Endothelial cell of umbilical vein (primary cell): ENCODE measurements at regions of chr7 and their contacts with region 1.

Region 1: DNA sequence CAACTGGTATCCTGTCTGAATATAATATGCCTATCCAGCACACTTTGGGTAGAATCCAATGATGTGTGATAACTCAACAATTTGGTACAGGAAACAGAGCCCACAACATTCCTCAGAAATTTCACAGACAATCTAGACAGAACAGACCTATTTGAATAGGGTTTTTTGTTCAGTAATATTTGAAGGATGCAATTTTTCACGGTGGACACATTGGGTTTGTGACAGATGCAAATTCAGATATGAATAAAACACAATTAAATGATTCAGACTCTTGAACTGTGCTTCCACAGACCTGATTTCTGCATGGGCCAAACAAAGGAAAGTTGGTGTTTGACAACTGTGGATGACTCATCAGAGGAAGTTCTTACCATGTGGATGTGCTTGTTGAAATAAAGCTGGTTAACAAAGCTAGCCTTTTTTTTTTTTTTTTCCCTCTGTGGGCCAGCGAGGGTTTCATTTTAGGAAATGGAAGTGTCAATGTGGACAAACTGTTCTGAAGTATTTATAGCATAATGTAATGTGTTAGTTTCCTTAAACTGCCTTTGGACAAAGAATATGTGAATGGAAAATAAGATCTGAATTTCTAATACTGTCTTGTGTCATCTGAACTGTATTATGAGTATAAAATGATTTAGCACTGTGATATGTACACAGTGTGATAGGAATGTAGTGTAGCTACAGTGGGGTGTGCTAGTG is 43.2 kb upstream of the FAM133B start:
- DNase-seq: peak; percentile 98
- H3K4me3 ChIP-seq: peak overlapping the region in 1 of 3 experiments; percentile 31
- H3K27ac ChIP-seq: peak overlapping the region; percentile 99
- H3K4me1 ChIP-seq: peaks cover 57% of the 10 kb centered on the region
- H3K27me3 ChIP-seq: no peaks in the 10 kb centered on the region
- CTCF ChIP-seq: no peak
- POLR2A ChIP-seq: peak; percentile 27

Region 2: DNA sequence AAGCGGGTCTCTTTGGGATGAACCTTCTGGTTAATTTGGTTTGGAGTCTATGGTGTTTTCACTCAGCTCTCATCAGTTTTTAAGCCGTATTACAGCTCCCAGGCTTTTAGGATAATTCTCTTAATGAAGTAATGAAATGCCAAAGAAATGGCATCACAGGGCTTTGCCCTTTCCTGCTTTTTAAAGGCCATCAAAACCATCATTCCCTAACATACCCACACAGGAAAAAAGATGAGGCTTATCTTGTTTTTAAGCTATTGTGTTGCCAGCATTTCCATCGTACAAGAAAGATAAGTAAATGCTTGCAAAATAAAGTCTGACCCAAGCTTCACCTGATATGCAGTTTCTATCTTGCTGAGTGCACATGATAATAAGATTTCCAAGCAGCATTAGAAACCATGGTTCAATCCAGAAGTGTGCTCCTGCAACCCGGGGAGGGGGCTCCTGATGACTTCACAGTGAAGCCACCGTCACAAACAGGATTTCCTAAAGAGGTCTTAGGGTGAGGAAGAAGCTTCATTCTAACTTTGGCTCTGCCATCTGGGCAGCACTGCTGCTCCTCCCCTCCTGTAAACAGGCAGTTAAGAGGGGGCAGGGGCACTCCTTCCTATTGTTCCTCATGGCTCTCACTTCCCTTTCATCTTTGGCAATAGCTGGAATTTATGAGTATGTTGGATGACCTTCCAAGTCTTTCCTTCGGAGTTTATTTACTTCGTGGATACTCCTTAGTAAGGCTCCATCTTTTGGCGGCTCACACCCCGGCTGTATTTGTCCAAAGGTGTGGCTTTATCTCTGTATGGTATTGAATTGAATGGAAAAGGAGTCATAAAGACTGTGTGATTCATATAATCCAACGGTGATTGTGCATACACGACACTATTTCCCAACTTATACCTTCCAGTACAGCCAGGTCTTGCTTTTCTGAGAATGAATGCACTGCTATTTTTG is 12.0 kb after region 1 on chr7:
- CTCF ChIA-PET with region 1: interaction called, 28 read pairs
- POLR2A ChIA-PET with region 1: interaction called, 5 read pairs
- dilution Hi-C with region 1: no loop called
- intact Hi-C with region 1: loop called (anchors 1 kb)
- DNase-seq: peak; percentile 90
- H3K4me3 ChIP-seq: no peak overlapping the region
- H3K27ac ChIP-seq: peak overlapping the region; percentile 53
- H3K4me1 ChIP-seq: peaks cover 35% of the 10 kb centered on the region
- H3K27me3 ChIP-seq: no peaks in the 10 kb centered on the region
- CTCF ChIP-seq: no peak
- POLR2A ChIP-seq: no peak

Region 3: DNA sequence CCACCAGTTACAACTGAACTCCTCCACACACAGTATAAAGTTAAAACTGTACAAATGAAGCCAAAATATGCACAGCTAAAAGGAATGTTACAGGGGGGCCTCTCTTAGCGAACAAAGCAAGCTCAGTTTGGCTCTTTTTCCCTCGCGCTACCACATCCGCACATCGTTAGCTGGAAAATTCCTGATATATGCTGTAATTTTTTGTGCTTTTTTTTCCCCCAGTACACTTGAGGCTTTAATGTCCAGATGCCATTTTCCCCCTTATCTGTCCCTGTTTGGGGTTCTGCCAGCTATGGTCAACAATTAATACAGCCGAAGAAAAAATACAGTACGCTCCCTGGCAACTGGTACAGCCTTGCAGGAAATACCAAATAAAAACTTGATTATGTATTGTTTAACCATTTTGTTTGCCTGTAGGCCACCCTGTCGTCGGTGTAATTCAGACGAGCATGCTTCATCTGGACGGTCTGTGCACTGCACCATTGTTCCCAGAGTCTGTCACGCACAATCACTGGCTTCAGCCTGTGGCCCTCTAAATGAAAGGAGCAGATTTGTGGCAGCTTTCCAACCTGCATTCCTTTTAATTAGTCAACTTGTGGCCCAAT is 65.0 kb after region 1 on chr7:
- CTCF ChIA-PET with region 1: interaction called, 6 read pairs
- POLR2A ChIA-PET with region 1: interaction called, 6 read pairs
- dilution Hi-C with region 1: no loop called
- intact Hi-C with region 1: loop called (anchors 1 kb)
- DNase-seq: peak; percentile 95
- H3K4me3 ChIP-seq: peak overlapping the region in 1 of 3 experiments; percentile 1
- H3K27ac ChIP-seq: peak overlapping the region; percentile 75
- H3K4me1 ChIP-seq: peaks cover 44% of the 10 kb centered on the region
- H3K27me3 ChIP-seq: no peaks in the 10 kb centered on the region
- CTCF ChIP-seq: no peak
- POLR2A ChIP-seq: peak; percentile 35

Region 4: DNA sequence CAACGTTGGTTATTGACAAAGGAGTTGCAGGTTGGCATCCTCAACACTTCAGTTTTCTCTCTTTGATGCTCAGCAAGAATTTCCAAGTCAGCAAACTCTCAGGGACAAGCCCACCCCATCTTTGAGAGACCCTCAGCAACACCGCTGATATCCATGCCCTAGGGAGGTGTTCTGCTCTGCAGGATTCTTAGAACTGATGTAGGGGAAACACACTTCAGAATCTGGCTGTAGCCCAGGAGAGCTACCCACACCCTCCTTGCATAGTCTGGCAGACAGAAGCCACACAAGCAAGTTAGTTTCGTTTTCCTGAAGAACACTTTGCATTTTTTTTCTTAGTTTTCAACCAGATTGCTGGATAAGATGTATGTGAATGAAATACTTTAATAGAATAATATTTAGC is 514.0 kb after region 1 on chr7:
- CTCF ChIA-PET with region 1: no interaction called
- POLR2A ChIA-PET with region 1: no interaction called
- dilution Hi-C with region 1: no loop called
- intact Hi-C with region 1: loop called (anchors 10 kb)
- DNase-seq: peak; percentile 76
- H3K4me3 ChIP-seq: peak overlapping the region; percentile 30 to 89 (median 71)
- H3K27ac ChIP-seq: peak overlapping the region; percentile 50
- H3K4me1 ChIP-seq: peaks cover 20% of the 10 kb centered on the region
- H3K27me3 ChIP-seq: no peaks in the 10 kb centered on the region
- CTCF ChIP-seq: no peak
- POLR2A ChIP-seq: no peak